A673 (cell line): ENCODE measurements at regions of chr18 and their contacts with region 1.

Region 1: GRCh38 chr18:26648509-26649192 is 100.3 kb upstream of the KCTD1 start:
- DNase-seq: no peak
- H3K4me3 ChIP-seq: no peak overlapping the region
- H3K27ac ChIP-seq: no peak overlapping the region
- H3K4me1 ChIP-seq: no peaks in the 10 kb centered on the region
- H3K27me3 ChIP-seq: peaks cover 43% of the 10 kb centered on the region
- CTCF ChIP-seq: no peak

Region 2: DNA sequence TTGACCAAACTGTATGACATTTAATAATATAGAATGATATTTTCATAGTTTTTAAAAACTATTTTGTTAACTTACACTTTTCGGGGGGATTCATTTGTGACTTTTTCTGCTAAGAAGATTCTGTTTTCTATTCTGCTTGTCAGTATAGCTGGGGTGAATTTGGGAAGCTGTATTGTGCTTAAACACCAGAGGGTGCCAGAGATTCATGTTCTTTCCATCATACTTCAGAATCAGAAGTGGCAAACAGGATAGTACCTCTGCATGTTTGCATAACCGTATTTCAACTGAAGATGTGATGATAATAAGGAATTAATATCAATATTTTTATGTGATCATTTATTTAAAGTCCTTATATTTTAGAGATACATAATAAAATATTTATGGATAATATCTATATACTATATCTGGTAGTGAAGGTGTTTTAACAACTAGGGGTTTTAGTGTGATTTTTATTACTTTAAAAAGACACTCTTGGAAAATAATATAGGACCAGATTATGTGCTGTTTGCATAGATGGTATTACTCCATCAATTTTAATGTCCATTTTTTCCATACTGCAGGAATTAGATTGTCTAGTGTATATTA is 341.4 kb before region 1 on chr18:
- CTCF ChIA-PET with region 1: no interaction called
- POLR2A ChIA-PET with region 1: no interaction called
- intact Hi-C with region 1: loop called (anchors 5 kb)
- DNase-seq: peak; percentile 54
- H3K4me3 ChIP-seq: no peak overlapping the region
- H3K27ac ChIP-seq: no peak overlapping the region
- H3K4me1 ChIP-seq: no peaks in the 10 kb centered on the region
- H3K27me3 ChIP-seq: no peaks in the 10 kb centered on the region
- CTCF ChIP-seq: peak; percentile 70

Region 3: GRCh38 chr18:26383454-26384270 is 265.0 kb before region 1 on chr18:
- CTCF ChIA-PET with region 1: interaction called, 3 read pairs
- POLR2A ChIA-PET with region 1: no interaction called
- intact Hi-C with region 1: loop called (anchors 1 kb)
- DNase-seq: peak; percentile 58
- H3K4me3 ChIP-seq: no peak overlapping the region
- H3K27ac ChIP-seq: no peak overlapping the region
- H3K4me1 ChIP-seq: no peaks in the 10 kb centered on the region
- H3K27me3 ChIP-seq: no peaks in the 10 kb centered on the region
- CTCF ChIP-seq: peak; percentile 77

Region 4: DNA sequence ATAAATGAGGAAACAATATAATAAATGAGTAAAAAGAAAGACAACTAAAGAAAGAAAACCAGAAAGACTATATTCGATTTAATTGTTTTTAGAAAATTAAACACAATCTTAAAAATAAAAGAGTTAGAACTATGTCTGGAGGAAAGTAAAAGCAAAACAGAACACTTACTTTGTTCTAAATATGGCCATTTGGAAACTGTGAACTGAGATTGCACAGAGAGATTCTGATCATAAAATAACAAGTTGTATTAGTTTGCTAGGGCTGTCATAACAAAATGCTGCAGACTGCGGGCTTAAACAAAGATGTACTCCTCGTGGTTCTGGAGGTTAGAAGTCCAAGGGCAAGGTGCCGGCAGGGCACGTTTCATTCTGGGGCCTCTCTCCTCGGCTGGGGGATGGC is 344.9 kb after region 1 on chr18:
- CTCF ChIA-PET with region 1: no interaction called
- POLR2A ChIA-PET with region 1: no interaction called
- intact Hi-C with region 1: no loop called
- DNase-seq: no peak
- H3K4me3 ChIP-seq: no peak overlapping the region
- H3K27ac ChIP-seq: no peak overlapping the region
- H3K4me1 ChIP-seq: no peaks in the 10 kb centered on the region
- H3K27me3 ChIP-seq: no peaks in the 10 kb centered on the region
- CTCF ChIP-seq: no peak